ENCODE measurements at regions of chr2 and their contacts with region 1.

Region 1: DNA sequence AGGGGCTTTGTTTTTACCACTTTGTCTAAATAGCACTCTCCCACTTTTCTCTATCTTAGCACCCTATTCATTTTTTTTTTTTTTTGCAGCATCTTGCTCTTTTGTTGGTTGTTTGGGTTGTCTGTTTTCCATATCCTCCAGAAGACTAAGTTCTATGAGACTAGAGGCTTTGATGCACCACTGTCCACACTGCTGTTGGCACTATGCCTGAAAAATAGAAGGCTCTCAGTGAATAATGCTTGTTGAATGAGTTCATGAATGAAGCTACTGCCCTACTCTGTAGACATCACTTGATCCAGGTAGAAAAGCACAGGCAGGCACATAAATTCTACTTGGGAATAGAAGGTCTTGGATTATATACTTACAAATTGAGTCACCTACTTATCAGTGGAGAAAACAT is 7.3 kb downstream of the IL1A start:
- DNase-seq: no peak
- H3K4me3 ChIP-seq: no peak overlapping the region
- H3K27ac ChIP-seq: no peak overlapping the region
- H3K4me1 ChIP-seq: no peaks in the 10 kb centered on the region
- H3K27me3 ChIP-seq: no peaks in the 10 kb centered on the region
- CTCF ChIP-seq: no peak

Region 2: GRCh38 chr2:112866128-112866835 is 89.2 kb after region 1 on chr2:
- CTCF ChIA-PET with region 1: no interaction called
- POLR2A ChIA-PET with region 1: no interaction called
- intact Hi-C with region 1: no loop called
- DNase-seq: no peak
- H3K4me3 ChIP-seq: no peak overlapping the region
- H3K27ac ChIP-seq: no peak overlapping the region
- H3K4me1 ChIP-seq: peaks cover 14% of the 10 kb centered on the region
- H3K27me3 ChIP-seq: no peaks in the 10 kb centered on the region
- CTCF ChIP-seq: no peak

Region 3: DNA sequence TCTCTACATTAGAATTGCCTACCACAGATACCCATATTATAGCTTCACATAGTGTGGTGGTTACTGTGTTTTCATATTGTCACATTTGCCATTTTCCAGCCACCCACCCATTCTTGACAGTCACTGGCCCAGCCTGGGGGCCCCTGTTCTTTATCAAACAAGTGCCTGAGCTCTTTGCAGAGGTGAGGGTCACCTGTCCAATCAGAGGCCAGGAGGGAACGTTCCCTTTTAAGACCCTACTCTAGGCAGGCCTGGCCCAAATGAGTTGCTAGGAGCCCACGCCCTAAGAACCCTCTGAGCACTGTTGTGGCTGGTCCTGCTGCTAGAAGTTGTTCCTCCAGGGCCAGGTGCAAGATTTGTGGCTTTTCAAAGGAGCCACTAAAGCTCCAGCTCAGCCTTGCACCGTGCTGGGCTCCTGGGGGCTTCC is 139.1 kb after region 1 on chr2:
- CTCF ChIA-PET with region 1: no interaction called
- POLR2A ChIA-PET with region 1: no interaction called
- intact Hi-C with region 1: no loop called
- DNase-seq: no peak
- H3K4me3 ChIP-seq: no peak overlapping the region
- H3K27ac ChIP-seq: no peak overlapping the region
- H3K4me1 ChIP-seq: no peaks in the 10 kb centered on the region
- H3K27me3 ChIP-seq: no peaks in the 10 kb centered on the region
- CTCF ChIP-seq: no peak

Region 4: DNA sequence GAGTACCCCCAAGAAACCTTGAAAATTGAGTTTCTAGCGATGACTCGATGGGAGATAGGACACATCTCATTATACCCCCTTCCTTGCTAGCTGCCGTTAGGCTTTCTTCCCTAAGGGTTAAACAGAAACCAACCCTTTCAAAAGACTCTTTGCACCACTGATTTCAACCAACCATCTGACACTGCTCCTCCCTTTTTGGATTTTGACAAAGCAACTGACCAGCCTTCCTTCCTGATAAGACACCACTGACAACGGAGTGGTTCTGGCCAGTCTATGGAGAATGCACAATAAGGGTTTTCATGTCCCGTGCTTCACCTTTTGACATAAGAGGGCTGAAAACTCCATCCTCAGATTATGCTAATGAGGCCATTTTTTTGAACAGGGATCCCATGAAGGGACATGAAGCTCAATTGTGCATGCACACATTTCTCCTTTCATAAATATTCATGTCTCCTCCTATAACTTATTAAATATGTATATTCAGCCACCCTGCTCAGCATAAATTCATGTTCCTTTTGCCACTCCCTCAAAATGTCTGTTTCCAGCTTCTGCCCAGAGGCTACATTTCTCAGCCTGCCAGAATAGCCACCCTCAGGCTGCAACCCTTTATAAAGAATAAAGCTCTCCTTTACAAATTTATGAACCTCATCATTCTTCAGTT is 1032.2 kb after region 1 on chr2:
- CTCF ChIA-PET with region 1: no interaction called
- POLR2A ChIA-PET with region 1: interaction called, 11 read pairs
- intact Hi-C with region 1: no loop called
- DNase-seq: no peak
- H3K4me3 ChIP-seq: no peak overlapping the region
- H3K27ac ChIP-seq: no peak overlapping the region
- H3K4me1 ChIP-seq: no peaks in the 10 kb centered on the region
- H3K27me3 ChIP-seq: no peaks in the 10 kb centered on the region
- CTCF ChIP-seq: no peak

Region 5: GRCh38 chr2:114316532-114317300 is 1539.7 kb after region 1 on chr2:
- CTCF ChIA-PET with region 1: no interaction called
- POLR2A ChIA-PET with region 1: no interaction called
- intact Hi-C with region 1: no loop called
- DNase-seq: no peak
- H3K4me3 ChIP-seq: no peak overlapping the region
- H3K27ac ChIP-seq: no peak overlapping the region
- H3K4me1 ChIP-seq: no peaks in the 10 kb centered on the region
- H3K27me3 ChIP-seq: no peaks in the 10 kb centered on the region
- CTCF ChIP-seq: no peak